ENCODE measurements at regions of chr10 and their contacts with region 1.

Region 1: DNA sequence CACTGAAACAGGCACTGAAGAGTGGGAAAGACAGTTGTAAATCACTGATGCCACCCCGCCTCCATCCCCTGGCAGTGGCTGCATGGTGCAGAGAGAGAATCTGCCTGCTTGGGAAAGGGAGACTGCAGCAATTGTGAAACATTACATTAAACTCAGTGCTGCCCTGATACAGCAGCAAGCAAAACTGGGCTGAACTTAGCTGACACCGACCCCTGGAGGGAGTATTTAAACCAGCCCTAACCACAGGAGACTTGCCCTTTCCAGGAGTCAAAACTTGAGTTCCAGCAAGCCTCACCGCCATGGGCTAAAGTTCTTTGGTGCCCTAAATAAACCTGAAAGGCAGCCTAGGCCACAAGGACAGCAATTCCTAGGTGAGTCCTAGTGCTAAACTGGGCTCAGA is 109.4 kb upstream of the PLPP4 start:
- DNase-seq: no peak
- ATAC-seq: no peak
- H3K4me3 ChIP-seq: no peak overlapping the region
- H3K27ac ChIP-seq: no peak overlapping the region
- H3K4me1 ChIP-seq: no peaks in the 10 kb centered on the region
- H3K27me3 ChIP-seq: no peaks in the 10 kb centered on the region
- CTCF ChIP-seq: no peak

Region 2: DNA sequence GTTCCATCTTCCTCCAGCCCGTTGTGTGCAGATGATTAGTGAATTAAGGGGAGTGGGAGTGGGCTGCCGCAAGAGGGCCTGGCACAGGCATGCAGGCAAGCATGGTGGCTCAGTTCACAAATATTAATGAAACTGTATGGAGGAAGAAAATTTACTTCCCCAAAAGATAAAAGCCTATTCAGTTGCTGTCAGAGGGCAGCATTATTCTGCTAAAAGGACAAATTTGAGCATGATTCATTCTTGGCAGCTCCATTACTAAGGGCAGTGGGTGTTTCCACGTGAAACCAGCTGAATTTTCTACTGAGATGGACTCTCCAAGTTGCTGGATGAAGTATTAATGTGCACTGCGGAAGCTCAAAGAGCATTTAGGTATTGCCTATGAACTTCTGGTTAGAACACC is 412.6 kb after region 1 on chr10:
- intact Hi-C with region 1: no loop called
- DNase-seq: no peak
- ATAC-seq: no peak
- H3K4me3 ChIP-seq: no peak overlapping the region
- H3K27ac ChIP-seq: no peak overlapping the region
- H3K4me1 ChIP-seq: no peaks in the 10 kb centered on the region
- H3K27me3 ChIP-seq: peaks cover 0 to 10% (median 0%) of the 10 kb centered on the region in 3 donors
- CTCF ChIP-seq: no peak

Region 3: DNA sequence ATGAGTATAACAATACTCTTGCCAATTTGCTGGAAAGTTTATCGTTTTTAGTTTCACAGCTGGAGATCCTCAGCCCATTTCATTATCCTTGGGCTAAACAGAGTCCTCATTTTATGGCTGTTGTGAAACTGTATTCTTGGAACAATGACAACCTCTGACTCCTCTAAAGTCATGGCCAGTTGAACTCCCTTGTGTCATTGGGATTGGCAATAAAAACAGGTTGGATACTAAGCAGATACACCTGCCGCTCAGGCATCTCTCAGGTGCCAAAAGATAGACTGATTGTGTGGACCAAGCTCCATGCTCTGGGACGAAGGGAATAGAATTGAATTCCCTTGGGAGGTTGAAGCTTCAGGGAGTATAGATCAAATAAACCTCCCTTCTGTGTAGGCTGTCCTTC is 685.7 kb after region 1 on chr10:
- intact Hi-C with region 1: loop called in 1 of 2 experiments (anchors 5 kb)
- DNase-seq: no peak
- ATAC-seq: peak in 1 of 4 donors; percentile 55
- H3K4me3 ChIP-seq: no peak overlapping the region
- H3K27ac ChIP-seq: no peak overlapping the region
- H3K4me1 ChIP-seq: no peaks in the 10 kb centered on the region
- H3K27me3 ChIP-seq: no peaks in the 10 kb centered on the region
- CTCF ChIP-seq: no peak